AG04449 (cell line): ENCODE measurements at regions of chr11 and their contacts with region 1.

Region 1: DNA sequence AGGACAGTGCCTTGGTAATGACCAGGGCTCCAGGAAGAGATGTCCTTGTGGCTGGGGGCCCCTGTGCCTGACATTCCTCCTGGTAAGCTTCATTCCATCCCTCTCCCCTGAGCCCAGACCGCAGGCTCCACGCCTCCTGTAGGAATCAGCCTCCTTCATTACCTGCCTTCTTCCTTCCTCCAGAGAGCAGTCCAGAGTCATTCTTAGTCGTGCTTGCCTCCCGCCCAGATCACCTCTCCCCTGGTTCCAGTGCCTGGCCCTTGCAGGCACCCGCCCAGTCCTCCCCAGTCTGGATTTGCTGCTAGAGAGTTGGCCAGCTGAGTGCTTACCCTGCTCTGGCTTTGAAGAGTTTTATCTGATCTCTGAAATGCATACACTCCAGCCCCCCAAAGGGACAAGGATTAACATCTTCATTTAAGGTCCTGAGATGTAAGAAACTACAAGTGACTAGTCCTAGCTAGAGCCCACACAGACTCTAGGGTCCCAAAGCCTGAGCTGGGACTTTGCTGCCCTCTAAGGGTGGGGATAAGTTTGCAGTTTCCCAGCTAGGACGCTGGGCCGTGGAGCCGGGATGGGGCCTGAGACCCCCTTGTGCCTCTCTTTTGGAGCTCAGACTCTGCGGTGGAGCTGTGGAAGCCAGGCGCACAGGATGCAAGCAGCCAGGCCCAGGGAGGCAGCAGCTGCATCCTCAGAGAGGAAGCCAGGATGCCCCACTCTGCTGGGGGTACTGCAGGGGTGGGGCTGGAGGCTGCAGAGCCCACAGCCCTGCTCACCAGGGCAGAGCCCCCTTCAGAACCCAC is 1.6 kb downstream of the NR1H3 start:
- DNase-seq: no peak
- H3K4me3 ChIP-seq: no peak overlapping the region
- CTCF ChIP-seq: peak; percentile 65

Region 2: GRCh38 chr11:47161134-47161854 is 98.1 kb before region 1 on chr11:
- CTCF ChIA-PET with region 1: interaction called, 42 read pairs
- POLR2A ChIA-PET with region 1: no interaction called
- DNase-seq: no peak
- H3K4me3 ChIP-seq: no peak overlapping the region
- CTCF ChIP-seq: peak; percentile 85

Region 3: DNA sequence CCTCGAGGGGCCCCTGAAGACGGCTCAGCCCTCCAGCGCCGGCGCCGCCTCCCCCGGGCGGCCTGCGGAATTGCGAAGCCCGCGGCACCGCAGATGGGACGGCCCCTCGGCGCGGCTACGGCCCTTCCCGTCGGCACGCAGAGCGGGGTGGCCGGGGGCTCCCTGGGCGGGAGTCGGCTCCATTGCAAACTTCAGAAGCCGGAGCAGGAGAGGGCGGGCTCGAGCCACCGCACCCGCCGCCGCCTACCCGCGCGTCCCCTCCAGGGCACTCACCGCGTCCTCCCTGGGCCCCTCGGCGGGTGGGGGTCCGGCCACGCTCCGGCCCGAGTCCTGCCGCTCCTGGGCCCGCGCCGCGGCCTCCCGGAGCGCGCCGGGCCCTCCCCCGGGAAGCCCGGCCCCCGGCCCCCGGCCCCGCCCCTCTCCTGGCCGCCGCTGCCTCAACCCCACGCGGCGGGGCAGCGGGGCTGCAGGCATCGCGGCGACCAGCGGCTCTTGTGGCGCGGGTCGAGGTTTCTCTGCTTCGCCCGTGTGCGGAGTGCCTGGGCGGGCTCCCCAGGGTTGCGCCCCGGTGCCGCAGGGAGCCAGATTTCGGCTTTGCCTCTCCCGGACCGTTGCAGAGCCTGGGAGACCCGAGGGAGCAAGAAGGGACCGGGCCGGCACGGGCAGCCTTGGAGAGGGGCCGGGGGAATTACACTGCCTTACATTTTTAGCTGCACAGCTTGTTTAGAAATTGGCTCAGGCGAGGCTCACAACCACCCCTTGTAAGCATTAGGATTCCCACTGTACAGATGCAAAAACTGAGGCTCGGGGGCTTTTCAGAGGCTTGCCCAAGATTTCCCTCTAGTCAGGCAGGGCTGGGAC is 73.1 kb before region 1 on chr11 and contains the start of gene PACSIN3:
- CTCF ChIA-PET with region 1: interaction called, 108 read pairs
- POLR2A ChIA-PET with region 1: no interaction called
- DNase-seq: no peak
- H3K4me3 ChIP-seq: peak within 1 kb of the TSS; percentile 71
- CTCF ChIP-seq: peak; percentile 12

Region 4: DNA sequence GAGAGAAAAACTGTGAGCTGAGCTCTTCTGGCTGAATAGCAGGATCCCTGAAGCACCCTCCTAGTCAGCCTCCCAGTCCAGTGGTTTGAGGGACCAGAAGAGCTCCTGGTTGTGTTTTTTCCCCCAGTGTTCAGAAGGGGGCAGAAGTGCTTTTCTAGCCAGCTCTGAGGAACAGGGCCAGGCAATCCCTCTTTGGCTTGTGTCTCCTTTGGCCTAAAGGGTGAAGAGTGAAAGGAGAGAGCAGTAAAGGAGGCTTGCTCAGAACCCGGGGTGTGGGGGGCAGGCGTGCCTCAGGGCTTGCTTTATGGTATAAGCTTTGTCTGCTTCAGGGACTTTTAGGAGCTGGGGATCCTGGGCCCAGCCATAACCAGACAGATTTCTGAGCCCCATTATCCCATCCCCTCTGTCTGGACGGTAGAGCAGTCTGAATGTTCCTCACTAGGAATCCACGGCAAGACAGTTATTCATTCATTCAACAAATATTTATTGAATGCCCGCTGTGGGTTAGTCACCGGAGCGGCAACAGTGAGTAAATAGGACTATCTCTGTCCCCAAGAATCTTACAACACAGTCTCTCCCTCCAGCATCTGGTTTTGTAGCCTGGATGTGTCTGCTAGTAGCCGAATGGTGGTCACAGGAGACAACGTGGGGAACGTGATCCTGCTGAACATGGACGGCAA is 25.2 kb before region 1 on chr11:
- CTCF ChIA-PET with region 1: interaction called, 39 read pairs
- POLR2A ChIA-PET with region 1: no interaction called
- DNase-seq: no peak
- H3K4me3 ChIP-seq: no peak overlapping the region
- CTCF ChIP-seq: peak; percentile 47

Region 5: DNA sequence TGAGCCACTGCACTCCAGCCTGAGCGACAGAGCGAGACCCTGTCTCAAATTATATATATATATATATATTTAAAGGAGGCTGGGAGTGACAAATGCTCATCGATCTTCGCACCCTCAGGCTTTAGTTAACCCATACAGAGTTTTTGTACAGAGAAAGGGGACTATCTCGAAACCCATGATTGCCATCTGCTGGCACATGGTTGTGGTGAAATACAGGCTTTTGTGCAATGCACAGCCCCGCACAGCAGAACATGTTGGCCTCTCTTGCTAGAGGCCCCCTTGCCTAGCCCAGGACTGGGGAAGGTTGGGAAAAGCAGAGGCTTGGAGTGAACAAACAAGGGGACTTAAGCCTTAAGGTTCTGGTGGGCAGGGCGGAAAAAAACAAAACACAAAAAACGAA is 89.5 kb after region 1 on chr11:
- CTCF ChIA-PET with region 1: interaction called, 16 read pairs
- POLR2A ChIA-PET with region 1: no interaction called
- DNase-seq: no peak
- H3K4me3 ChIP-seq: no peak overlapping the region
- CTCF ChIP-seq: peak; percentile 29